ENCODE measurements at regions of chr3 and their contacts with region 1.

Region 1: GRCh38 chr3:129596194-129597086 is 10.0 kb downstream of the PLXND1 start:
- DNase-seq: no peak
- H3K4me3 ChIP-seq: no peak overlapping the region
- H3K4me3 Mint-ChIP-seq: peak overlapping the region in 4 of 7 donors; percentile 3 to 49 (median 46)
- H3K27ac ChIP-seq: peak overlapping the region; percentile 2
- H3K27ac Mint-ChIP-seq: peak overlapping the region in 6 of 8 donors; percentile 6 to 88 (median 62)
- H3K4me1 ChIP-seq: peaks cover 25% of the 10 kb centered on the region
- H3K4me1 Mint-ChIP-seq: peaks cover 58 to 80% (median 66%) of the 10 kb centered on the region in 3 donors
- H3K27me3 ChIP-seq: no peaks in the 10 kb centered on the region
- H3K27me3 Mint-ChIP-seq: peaks cover 0 to 9% of the 10 kb centered on the region in 2 donors

Region 2: DNA sequence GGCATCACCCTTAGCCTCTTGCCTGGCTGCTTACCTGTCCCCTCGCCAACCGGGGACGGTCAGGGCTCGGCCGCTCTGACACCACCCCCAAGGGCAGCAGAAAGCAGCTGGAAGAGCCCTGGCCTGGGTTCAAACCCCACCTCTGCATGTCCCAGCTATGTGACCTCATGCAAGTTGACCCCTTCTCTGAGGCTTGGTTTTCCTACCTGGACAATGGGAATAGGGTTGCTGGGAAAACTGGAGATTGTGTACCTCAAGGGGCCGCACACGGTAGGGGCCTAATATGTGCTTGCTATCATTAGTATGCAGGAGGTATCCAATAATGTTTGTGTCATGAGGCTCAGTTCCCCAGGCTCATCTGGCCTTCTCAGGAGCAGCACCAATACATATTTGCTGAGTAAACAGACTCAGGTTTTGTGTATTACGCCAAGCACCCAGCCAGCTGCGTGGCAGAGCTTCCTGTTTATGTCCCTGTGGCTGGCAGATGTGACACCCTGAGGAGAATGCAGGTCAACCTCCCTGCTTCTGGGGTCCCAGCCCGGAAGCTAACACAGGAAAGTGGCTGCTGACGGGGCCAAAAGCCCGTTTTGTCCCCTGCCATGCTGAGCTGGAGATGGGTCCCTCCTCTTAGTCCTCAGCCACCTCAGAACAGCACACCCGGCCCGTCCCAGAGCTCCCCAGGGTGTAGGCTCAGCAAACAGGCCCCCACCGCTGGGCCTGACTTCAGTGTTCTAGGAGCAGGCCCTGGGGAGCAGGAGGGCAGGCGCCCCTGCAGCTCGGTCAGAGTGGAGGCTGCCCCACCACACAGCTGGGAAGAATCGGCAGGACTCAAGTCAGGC is 19.7 kb before region 1 on chr3:
- CTCF ChIA-PET with region 1: interaction called, 15 read pairs
- POLR2A ChIA-PET with region 1: interaction called, 27 read pairs
- DNase-seq: peak; percentile 69 to 92 (median 83)
- H3K4me3 ChIP-seq: no peak overlapping the region
- H3K4me3 Mint-ChIP-seq: peak overlapping the region; percentile 50 to 86 (median 68)
- H3K27ac ChIP-seq: peak overlapping the region; percentile 16
- H3K27ac Mint-ChIP-seq: peak overlapping the region; percentile 87 to 100 (median 98)
- H3K4me1 ChIP-seq: peaks cover 47% of the 10 kb centered on the region
- H3K4me1 Mint-ChIP-seq: peaks cover 57 to 77% (median 61%) of the 10 kb centered on the region in 3 donors
- H3K27me3 ChIP-seq: no peaks in the 10 kb centered on the region
- H3K27me3 Mint-ChIP-seq: no peaks in the 10 kb centered on the region

Measured in CD8-positive, alpha-beta memory T cell (primary cell).